Cardiac septum (tissue), 1 donor: ENCODE measurements at regions of chr12 and their contacts with region 1.

Region 1: DNA sequence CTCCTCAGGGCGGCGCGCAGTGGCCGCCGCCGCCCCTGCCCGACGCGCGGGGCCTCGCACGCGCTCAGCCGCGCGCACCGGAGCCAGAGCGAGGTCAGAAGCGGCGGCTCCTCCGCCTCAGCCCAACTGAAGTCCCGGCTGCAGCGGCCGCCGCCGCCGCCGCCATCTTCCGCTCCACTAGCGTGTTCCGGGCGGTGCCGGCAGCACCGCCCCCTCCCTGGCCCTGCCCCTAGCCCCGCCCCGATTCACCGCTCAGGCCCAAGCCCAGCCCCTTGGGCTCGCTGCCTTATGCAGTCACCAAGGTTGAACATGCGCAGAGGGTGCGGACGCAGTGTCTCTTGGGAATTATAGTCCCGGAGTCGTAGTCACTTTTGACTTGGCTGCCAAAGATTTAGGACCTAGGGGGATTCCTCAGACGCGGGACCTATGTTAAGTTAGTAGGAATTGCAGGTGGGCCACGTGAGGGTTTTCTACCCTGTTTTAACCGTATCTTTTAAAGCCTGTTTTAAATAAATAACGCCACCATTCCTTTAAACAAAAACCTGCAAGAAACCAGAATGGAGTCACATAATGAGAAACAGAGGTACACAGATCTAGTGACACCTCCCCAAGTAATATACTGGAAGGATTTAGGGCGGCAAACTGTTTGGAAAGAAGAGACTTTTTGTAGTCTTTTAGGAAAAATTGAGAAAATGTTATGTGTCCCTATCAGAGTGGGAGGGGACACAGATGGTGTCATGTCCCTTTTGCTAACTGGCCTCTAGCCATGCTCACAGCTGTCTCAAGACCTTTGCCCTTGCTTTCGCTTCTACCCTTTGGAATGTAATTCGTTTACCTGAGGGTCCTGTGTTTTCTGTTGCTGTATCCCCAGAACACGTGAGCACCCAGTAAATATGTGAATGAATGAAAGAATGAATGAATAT is at the start of gene PPTC7:
- DNase-seq: peak; percentile 99
- total RNA-seq, gene PPTC7: 55.0 TPM

Region 2: DNA sequence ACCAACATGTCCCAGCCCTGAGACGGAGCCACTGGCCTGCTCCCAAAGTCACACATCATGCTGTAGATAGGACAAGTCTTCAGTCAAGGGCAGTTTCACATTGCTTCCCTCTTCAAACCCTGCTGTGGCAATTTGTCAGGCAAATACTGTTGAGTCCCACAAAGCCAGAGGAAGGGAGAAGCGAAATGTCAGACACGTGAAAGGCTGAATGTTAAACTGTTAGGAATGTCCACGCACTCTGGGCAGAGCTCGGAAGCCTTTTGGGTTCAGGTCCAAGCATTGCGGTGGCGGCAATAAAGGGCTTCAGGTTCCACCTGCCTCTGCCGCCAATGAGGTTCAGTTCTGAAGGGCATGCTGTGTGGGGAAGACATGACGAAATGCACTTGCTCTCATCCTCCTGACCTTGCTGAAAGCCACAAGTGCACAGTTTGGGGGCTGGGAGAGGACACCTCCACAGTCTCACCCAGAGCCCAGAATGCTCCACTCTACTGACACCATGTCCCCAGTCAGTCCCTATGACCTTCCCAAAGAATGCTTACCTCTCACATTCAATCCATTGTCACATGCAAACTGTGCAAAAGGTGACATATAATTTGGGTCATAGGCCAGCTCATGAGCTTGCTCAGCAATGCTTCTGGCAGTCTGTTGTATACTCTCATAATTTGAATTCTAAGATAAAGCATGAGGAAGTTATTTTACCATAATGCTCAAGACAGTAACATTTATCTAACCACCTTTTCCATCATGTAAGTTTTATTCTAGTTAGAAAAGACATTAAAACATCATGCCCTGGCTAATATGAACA is 45.6 kb before region 1 on chr12:
- intact Hi-C with region 1: loop called (anchors 5 kb)
- DNase-seq: peak; percentile 81